ENCODE measurements at regions of chr7 and their contacts with region 1.

Region 1: DNA sequence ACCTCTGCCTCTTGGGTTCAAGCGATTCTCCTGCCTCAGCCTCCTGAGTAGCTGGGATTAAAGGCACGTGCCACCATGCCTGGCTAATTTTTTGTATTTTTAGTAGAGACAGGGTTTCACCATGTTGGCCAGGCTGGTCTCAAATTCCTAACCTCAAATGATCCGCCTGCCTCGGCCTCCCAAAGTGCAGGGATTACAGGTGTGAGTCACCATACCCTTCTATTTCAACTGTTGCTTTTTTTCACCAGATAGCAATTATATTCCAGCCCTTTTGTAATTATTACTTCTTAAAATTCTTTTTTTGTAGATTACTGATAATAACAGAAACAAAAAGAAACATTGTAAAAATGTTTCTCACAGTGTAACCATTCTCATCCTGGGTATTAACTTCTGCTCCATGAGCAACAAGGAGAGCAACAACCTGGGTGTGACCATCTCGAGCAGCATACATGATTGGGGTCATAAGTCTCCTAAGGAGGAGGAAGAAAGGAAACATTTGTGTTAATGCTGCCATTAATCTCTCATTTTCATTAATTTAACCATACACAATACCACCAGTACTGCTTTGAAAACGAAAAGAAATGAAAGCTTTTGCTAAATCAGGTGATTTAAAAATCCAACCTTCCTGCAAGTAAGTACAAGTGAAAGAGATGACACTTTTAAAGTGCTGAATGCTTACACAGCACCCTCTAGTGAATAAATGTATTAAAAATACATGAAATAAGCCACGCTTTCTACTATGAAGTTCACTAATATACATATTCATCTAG is 41.8 kb downstream of the ASZ1 start:
- DNase-seq: no peak
- H3K4me3 ChIP-seq: no peak overlapping the region
- H3K27ac ChIP-seq: peak overlapping the region in 1 of 2 donors; percentile 10
- H3K4me1 ChIP-seq: no peaks in the 10 kb centered on the region
- H3K27me3 ChIP-seq: no peaks in the 10 kb centered on the region
- CTCF ChIP-seq: peak in 3 of 4 experiments; percentile 27 to 42 (median 39)
- POLR2A ChIP-seq: no peak

Region 2: GRCh38 chr7:116929914-116930913 is 455.3 kb before region 1 on chr7:
- intact Hi-C with region 1: loop called (anchors 10 kb)
- DNase-seq: peak; percentile 79
- H3K4me3 ChIP-seq: no peak overlapping the region
- H3K27ac ChIP-seq: no peak overlapping the region
- H3K4me1 ChIP-seq: no peaks in the 10 kb centered on the region
- H3K27me3 ChIP-seq: no peaks in the 10 kb centered on the region
- CTCF ChIP-seq: peak; percentile 82 to 93 (median 86)
- POLR2A ChIP-seq: no peak

Region 3: DNA sequence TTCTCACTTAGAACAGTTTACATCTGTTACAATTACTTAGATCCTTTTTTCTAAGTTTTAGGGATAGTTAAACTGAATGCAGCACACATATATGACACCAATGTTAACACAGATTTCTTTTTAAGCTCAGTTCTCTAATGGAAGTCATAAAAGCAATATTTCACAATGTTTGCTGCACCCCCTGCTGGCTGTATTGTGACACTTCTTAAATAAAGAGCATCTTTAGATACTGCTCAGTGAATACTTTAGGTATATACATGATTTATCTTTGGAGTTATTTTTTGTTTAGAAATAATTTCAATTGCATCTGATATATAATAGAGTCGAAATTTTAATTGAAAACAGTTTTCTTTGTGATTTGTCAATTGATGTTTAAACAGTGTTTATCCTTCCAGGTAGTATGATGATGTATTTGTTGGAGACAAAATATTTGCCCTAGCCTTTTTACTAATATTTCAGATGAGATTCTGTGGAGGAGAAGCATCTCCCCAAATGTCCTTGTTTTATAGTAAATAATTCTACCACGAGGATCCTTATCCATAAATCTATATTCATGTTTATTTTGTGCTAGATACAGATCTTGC is 257.8 kb before region 1 on chr7:
- intact Hi-C with region 1: loop called (anchors 10 kb)
- DNase-seq: peak; percentile 47
- H3K4me3 ChIP-seq: no peak overlapping the region
- H3K27ac ChIP-seq: no peak overlapping the region
- H3K4me1 ChIP-seq: no peaks in the 10 kb centered on the region
- H3K27me3 ChIP-seq: no peaks in the 10 kb centered on the region
- CTCF ChIP-seq: peak; percentile 60 to 90 (median 80)
- POLR2A ChIP-seq: no peak

Region 4: GRCh38 chr7:117212969-117213877 is 172.3 kb before region 1 on chr7:
- intact Hi-C with region 1: loop called (anchors 5 kb)
- DNase-seq: peak; percentile 31
- H3K4me3 ChIP-seq: no peak overlapping the region
- H3K27ac ChIP-seq: no peak overlapping the region
- H3K4me1 ChIP-seq: no peaks in the 10 kb centered on the region
- H3K27me3 ChIP-seq: no peaks in the 10 kb centered on the region
- CTCF ChIP-seq: peak; percentile 59 to 76 (median 72)
- POLR2A ChIP-seq: no peak

Measured in prostate gland (tissue), 2 donors.